ENCODE measurements at regions of chr5 and their contacts with region 1.

Region 1: GRCh38 chr5:133868946-133869518 is 99.4 kb downstream of the C5orf15 start:
- DNase-seq: peak; percentile 86
- ATAC-seq: peak; percentile 81
- H3K4me3 Mint-ChIP-seq: no peak overlapping the region
- H3K27ac Mint-ChIP-seq: no peak overlapping the region
- H3K4me1 Mint-ChIP-seq: peaks cover 7% of the 10 kb centered on the region
- H3K27me3 Mint-ChIP-seq: peaks cover 19% of the 10 kb centered on the region

Region 2: DNA sequence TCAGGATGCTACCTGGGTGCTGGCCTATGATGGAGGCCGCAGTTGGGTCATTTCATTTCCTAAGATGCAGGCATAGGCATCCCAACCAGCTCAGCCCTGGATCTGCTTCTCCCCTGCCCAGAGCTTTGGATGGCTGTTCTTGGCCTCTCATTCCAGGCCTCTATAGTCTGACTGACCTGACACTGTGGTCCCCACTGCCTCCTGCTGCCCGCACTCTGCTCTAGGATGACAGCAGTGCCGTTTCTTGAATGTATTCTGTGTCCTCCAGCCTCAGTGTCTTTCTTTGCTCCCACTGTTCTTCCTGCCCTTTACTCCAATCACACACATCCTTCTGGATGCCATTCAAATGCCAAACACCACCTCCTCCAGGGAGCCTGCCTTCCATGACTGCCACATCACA is 581.5 kb before region 1 on chr5:
- CTCF ChIA-PET with region 1: no interaction called
- DNase-seq: peak; percentile 54
- ATAC-seq: peak; percentile 57
- H3K4me3 Mint-ChIP-seq: no peak overlapping the region
- H3K27ac Mint-ChIP-seq: no peak overlapping the region
- H3K4me1 Mint-ChIP-seq: no peaks in the 10 kb centered on the region
- H3K27me3 Mint-ChIP-seq: no peaks in the 10 kb centered on the region

Region 3: GRCh38 chr5:133423618-133424282 is 445.3 kb before region 1 on chr5:
- CTCF ChIA-PET with region 1: interaction called, 11 read pairs
- DNase-seq: peak; percentile 71
- ATAC-seq: peak; percentile 80
- H3K4me3 Mint-ChIP-seq: no peak overlapping the region
- H3K27ac Mint-ChIP-seq: no peak overlapping the region
- H3K4me1 Mint-ChIP-seq: peaks cover 7% of the 10 kb centered on the region
- H3K27me3 Mint-ChIP-seq: peaks cover 16% of the 10 kb centered on the region

Region 4: DNA sequence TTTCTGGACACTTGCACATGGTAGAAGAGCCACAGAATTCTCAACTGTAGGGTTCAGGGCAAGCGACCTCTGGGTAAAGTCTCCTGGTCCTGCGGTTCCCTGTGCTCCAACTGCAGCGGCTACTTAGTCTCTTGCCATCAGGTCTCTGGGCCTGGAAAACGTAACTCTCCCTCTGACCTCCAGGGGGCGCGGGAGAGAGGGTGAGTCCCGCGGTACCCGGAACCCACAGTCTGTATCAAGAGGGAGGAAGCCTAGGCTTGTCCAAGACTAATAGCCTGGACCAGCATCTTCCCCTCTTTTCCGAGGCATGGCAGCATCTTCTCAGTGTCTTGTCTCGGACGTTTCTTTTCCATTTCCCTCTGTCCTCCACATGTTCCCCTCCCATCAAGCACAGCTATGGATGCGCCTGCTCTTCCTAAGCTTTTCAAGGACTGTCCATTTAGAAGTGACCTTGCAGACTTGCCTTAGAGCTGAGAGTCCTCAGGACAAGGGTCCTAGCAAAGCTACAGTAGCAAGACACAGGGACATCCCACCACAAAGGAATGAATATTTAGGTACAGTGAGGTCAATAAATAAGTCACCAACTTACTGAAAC is 316.0 kb before region 1 on chr5:
- CTCF ChIA-PET with region 1: interaction called, 11 read pairs
- DNase-seq: peak; percentile 66
- ATAC-seq: peak; percentile 61
- H3K4me3 Mint-ChIP-seq: no peak overlapping the region
- H3K27ac Mint-ChIP-seq: no peak overlapping the region
- H3K4me1 Mint-ChIP-seq: no peaks in the 10 kb centered on the region
- H3K27me3 Mint-ChIP-seq: peaks cover 36% of the 10 kb centered on the region

Region 5: DNA sequence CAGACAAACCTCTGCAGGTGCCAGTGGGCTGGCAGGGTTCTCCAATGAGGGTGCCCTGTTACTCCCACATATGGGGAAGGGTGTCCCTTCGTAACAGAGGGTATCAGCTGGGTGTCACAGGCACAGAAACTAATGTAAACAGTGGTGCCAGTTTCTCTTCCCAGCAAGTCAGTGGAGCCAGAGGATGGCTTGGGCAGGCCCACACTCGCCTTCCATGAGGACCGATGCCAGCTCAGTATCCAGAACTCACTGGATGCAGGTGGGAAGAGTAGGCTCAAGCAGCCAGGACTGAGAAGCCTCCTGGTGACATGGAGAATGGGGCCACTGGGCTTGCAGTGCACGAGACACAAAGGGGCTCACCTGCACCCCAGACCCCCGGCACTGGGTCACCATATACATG is 287.1 kb before region 1 on chr5:
- CTCF ChIA-PET with region 1: no interaction called
- DNase-seq: no peak
- ATAC-seq: no peak
- H3K4me3 Mint-ChIP-seq: no peak overlapping the region
- H3K27ac Mint-ChIP-seq: no peak overlapping the region
- H3K4me1 Mint-ChIP-seq: no peaks in the 10 kb centered on the region
- H3K27me3 Mint-ChIP-seq: peaks cover 19% of the 10 kb centered on the region

Region 6: DNA sequence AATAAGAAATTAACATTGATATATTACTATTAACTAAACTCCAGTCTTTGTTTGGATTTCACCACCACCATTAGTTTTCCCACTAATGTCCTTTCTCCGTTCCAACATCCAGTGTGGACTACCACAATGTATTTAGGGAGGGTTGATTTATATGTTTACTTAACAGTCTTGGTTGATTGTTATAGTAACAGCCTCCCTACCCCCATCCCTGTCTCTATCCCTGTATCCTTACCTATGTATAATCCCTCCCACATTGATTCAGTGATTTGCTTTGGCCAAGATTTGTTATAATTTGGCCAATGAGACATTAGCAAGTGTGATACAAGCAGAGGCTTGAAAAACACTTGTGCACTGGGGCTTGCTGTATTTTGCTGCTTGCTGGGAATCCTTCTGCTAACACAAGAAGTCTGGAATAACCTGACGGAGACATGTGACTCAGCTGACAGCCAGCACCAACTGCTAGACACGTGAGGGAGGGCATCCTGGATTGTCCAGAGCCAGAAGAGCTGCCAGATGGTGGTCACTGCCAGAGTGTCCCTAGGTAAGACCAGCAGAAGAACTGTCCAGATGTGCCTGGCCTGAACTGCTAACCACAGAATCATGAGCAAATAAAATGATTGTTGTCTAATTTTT is 194.3 kb after region 1 on chr5:
- CTCF ChIA-PET with region 1: no interaction called
- DNase-seq: no peak
- ATAC-seq: no peak
- H3K4me3 Mint-ChIP-seq: no peak overlapping the region
- H3K27ac Mint-ChIP-seq: no peak overlapping the region
- H3K4me1 Mint-ChIP-seq: no peaks in the 10 kb centered on the region
- H3K27me3 Mint-ChIP-seq: peaks cover 27% of the 10 kb centered on the region

Measured in activated CD8-positive, alpha-beta memory T cell treated with anti-CD3 and anti-CD28 coated beads, Interleukin-2, amount 10 ng/mL, durations not matched to agents 7 days and 5 days (primary cell).